ENCODE measurements at regions of chr2 and their contacts with region 1.

Region 1: DNA sequence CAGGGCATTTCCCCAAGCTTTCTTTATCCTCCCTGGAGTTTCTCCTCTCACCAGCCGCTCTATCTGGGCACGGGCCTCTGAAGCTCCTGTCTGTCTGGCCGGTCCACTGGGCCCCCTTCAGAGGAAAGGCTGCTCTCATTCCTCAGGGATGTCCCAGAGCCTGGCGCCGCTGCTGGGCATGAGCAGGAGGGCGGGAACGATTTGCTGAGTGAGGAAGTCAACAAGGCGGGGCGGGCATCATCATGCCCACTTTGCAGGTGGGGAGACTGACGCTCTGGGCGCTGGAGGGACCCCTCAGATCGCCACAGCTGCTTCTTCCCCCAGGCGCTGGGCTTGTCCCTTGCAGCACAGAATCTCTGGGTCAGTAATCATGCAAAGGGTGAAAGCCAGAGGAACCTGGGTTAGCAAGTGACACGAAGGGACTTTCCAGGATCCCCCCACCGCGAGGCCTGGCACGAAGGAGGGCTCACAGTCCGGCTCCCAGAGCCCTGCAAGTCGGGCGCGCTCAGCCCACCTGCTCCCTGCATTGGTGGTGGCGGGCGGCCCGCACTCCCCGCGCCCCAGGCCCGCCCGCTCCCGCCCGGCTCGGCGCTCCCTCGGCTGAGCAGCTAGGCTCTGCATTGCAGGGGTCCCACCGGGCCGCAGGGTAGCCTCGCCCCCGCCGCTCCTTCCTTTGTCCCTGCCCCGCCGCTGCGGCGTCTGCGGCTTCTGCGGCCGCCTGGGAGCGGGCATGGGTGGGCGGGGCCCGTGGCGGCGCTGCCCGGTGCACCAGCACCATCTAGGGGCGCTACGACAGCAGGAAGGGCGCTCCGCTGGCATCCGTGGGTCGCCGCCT is 157.8 kb downstream of the CYRIA start:
- DNase-seq: peak; percentile 96
- H3K4me3 ChIP-seq: peak overlapping the region in 1 of 2 experiments; percentile 44; a peak in 3 of 4 replicates
- H3K27ac ChIP-seq: no peak overlapping the region; a peak in 1 of 4 replicates
- H3K4me1 ChIP-seq: peaks cover 0 to 23% of the 10 kb centered on the region in 2 experiments; a peak in 1 of 4 replicates
- H3K27me3 ChIP-seq: no peaks in the 10 kb centered on the region
- CTCF ChIP-seq: peak; percentile 35
- EP300 ChIP-seq: no peak
- RAD21 ChIP-seq: peak; percentile 93

Region 2: DNA sequence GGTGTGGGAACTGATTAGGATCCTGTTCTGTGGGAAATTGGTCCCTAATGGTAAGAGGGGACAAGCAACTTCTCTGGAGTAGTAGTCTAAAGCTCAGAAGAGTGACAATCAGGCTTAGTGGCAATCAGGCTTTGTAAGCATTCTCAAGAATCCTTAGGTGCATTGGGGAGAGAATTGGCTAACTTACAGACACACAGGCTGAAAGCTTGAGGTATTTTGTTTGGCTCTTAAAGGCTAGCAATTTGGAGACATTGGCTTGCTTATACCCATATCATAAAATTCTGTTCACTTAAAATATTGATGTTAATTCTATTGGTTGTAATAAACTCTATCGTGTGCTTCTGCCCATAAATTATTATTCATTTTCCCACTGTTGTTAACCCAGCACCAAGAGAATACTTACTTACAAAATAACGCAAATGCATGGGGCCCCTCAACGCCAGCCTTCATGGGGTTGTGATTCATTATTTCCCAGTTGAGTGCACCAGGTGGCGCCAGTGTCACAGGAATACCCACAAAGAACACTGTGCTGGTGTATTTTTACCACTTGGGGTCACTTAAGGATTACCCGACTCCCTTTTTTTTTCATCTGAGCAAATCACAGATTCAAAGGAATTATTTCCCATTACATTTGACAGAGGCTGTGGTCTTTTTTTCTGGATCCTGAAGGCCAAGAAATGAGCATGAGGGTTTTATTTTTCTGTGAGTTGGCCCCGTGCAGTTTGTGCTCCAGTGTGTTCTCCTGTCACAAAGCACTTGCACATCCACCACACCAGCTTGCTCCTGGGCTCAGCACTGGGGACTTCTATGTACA is 870.7 kb before region 1 on chr2:
- CTCF ChIA-PET with region 1: interaction called, 67 read pairs
- POLR2A ChIA-PET with region 1: interaction called, 4 read pairs
- DNase-seq: peak; percentile 87
- H3K4me3 ChIP-seq: no peak overlapping the region; a peak in 1 of 4 replicates
- H3K27ac ChIP-seq: peak overlapping the region in 1 of 2 experiments; percentile 70; a peak in 2 of 4 replicates
- H3K4me1 ChIP-seq: peaks cover 5 to 8% of the 10 kb centered on the region in 2 experiments; a peak in 1 of 4 replicates
- H3K27me3 ChIP-seq: no peaks in the 10 kb centered on the region
- CTCF ChIP-seq: peak; percentile 98
- EP300 ChIP-seq: no peak
- RAD21 ChIP-seq: peak; percentile 100

Region 3: GRCh38 chr2:15927581-15928218 is 580.2 kb before region 1 on chr2:
- CTCF ChIA-PET with region 1: interaction called, 15 read pairs
- POLR2A ChIA-PET with region 1: no interaction called
- DNase-seq: no peak
- H3K4me3 ChIP-seq: no peak overlapping the region
- H3K27ac ChIP-seq: no peak overlapping the region
- H3K4me1 ChIP-seq: no peaks in the 10 kb centered on the region
- H3K27me3 ChIP-seq: no peaks in the 10 kb centered on the region
- CTCF ChIP-seq: no peak
- EP300 ChIP-seq: no peak
- RAD21 ChIP-seq: no peak

Region 4: DNA sequence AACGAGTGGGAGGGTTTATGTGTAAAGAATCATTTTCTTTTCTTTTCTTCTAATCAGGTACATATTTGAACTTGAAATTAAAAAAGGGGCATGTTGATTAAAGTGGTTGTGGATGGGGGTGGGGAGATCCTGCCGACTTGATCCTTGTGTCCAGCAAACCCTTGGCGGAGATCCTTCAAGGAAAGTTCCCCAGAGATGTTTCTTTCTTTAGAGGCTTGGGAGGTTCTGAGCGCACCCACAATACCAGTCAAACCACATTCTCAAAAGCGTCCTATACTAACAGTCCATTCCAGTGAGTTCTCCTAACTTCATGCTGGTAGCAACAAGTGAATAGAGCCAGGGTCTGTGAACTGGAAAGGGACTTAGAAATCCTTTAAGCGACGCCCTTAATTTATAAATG is 518.3 kb before region 1 on chr2:
- CTCF ChIA-PET with region 1: no interaction called
- POLR2A ChIA-PET with region 1: no interaction called
- DNase-seq: no peak
- H3K4me3 ChIP-seq: no peak overlapping the region
- H3K27ac ChIP-seq: no peak overlapping the region
- H3K4me1 ChIP-seq: peaks cover 0 to 19% of the 10 kb centered on the region in 2 experiments; a peak in 1 of 4 replicates
- H3K27me3 ChIP-seq: no peaks in the 10 kb centered on the region
- CTCF ChIP-seq: no peak
- EP300 ChIP-seq: no peak
- RAD21 ChIP-seq: no peak

Region 5: DNA sequence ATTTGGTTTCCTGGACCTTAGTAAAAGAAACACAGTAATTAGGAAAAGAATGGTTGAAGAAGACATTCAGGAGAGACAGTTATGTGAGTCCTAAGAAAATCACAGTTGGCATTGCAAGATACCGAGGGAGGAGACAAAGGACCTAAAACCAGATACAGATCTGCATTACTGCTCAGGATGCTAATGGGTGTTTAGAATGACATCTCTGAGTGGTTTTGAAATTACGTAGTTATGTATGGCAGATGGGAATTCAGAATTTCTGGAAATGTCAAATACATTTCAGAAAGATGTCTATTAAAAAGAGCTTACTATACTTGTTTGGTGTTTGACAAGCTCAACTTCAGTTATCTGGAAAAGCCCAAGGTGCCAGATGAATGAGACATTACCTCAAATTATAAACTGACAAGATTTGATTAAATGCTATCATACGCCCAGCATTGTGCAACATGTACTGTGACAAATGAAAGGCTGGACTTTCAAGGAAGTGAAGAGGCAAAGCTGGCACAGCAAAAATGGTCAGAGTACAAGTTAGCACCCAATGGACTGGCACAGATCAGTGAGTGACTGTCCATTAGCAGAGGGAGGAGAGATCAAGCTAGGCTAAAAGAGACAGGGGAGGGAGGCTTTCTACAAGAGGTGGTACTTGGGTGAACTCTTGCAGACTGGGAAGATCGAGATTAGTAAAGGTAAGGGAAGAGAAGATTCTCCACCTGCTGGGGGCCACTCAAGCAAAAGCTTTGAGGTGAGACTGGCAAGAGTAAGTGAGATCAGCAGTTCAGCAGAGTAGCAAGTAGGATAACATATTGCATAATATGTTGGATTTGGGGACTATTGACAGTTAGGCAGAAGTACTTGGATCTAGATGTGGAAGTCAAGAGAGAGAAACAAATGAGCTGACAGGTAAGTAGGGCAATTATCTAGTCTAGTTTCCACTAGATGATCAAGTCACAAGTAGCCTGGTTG is 11.2 kb before region 1 on chr2:
- CTCF ChIA-PET with region 1: interaction called, 66 read pairs
- POLR2A ChIA-PET with region 1: no interaction called
- DNase-seq: no peak
- H3K4me3 ChIP-seq: no peak overlapping the region
- H3K27ac ChIP-seq: no peak overlapping the region
- H3K4me1 ChIP-seq: no peaks in the 10 kb centered on the region
- H3K27me3 ChIP-seq: no peaks in the 10 kb centered on the region
- CTCF ChIP-seq: no peak
- EP300 ChIP-seq: no peak
- RAD21 ChIP-seq: no peak

Region 6: GRCh38 chr2:16553226-16553625 is 45.4 kb after region 1 on chr2:
- CTCF ChIA-PET with region 1: interaction called, 10 read pairs
- POLR2A ChIA-PET with region 1: no interaction called
- DNase-seq: peak; percentile 28
- H3K4me3 ChIP-seq: no peak overlapping the region; a peak in 1 of 4 replicates
- H3K27ac ChIP-seq: no peak overlapping the region
- H3K4me1 ChIP-seq: no peaks in the 10 kb centered on the region
- H3K27me3 ChIP-seq: no peaks in the 10 kb centered on the region
- CTCF ChIP-seq: peak; percentile 58
- EP300 ChIP-seq: no peak
- RAD21 ChIP-seq: peak; percentile 62